Prostate gland (tissue), 2 donors: ENCODE measurements at regions of chr4 and their contacts with region 1.

Region 1: GRCh38 chr4:180664766-180665368 is 1578.3 kb upstream of the TENM3 start:
- DNase-seq: peak; percentile 68
- H3K4me3 ChIP-seq: no peak overlapping the region
- H3K27ac ChIP-seq: no peak overlapping the region
- H3K4me1 ChIP-seq: no peaks in the 10 kb centered on the region
- H3K27me3 ChIP-seq: no peaks in the 10 kb centered on the region
- CTCF ChIP-seq: peak; percentile 27 to 69 (median 58)
- POLR2A ChIP-seq: no peak

Region 2: GRCh38 chr4:180598281-180598680 is 66.6 kb before region 1 on chr4:
- intact Hi-C with region 1: no loop called
- DNase-seq: no peak
- H3K4me3 ChIP-seq: no peak overlapping the region
- H3K27ac ChIP-seq: no peak overlapping the region
- H3K4me1 ChIP-seq: no peaks in the 10 kb centered on the region
- H3K27me3 ChIP-seq: no peaks in the 10 kb centered on the region
- CTCF ChIP-seq: no peak
- POLR2A ChIP-seq: no peak

Region 3: GRCh38 chr4:181528570-181529184 is 863.8 kb after region 1 on chr4:
- intact Hi-C with region 1: loop called (anchors 10 kb)
- DNase-seq: peak; percentile 23
- H3K4me3 ChIP-seq: no peak overlapping the region
- H3K27ac ChIP-seq: no peak overlapping the region
- H3K4me1 ChIP-seq: no peaks in the 10 kb centered on the region
- H3K27me3 ChIP-seq: no peaks in the 10 kb centered on the region
- CTCF ChIP-seq: peak; percentile 22 to 68 (median 60)
- POLR2A ChIP-seq: no peak